Adrenal gland (tissue), 19 donors: ENCODE measurements at regions of chr18 and their contacts with region 1.

Region 1: DNA sequence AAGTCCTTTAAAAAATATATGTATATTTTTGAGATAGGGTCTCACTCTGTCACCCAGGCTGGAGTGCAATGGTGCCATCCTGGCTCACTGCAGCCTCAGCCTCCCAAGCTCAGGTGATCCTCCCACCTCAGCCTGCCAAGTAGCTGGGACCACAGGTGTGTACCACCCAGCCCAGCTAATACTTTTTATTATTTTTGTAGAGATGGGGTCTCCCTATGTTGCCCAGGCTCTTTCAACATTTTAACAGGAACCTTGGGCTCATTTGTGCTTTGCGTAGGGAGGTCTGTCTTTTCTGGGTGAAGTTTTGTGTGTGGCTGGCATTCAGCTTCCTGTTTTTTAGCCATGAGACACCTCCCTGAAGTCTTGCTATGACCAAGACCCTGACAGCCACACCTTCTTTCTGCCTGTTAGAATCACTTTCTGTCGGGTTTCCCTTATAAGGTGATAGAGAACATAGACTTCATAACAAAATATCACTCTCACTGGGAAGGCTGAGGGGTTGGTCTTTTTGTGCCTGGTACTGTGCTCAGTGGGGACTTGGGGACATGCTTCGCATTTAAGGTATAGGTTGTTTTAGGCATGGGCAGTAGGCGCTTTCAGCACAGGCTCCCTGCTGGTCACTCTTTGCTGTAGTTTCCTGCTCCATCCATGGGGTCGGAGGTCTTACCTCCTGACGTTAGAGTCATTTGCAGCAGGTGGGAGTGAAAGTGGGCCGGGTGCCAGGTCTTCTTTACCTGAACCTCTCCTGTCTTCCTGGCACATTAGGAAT is 3.4 kb downstream of the RAB31 start:
- DNase-seq: no peak
- H3K4me3 ChIP-seq: peak overlapping the region in 1 of 4 donors; percentile 94
- H3K27ac ChIP-seq: peak overlapping the region in 4 of 5 donors; percentile 39 to 98 (median 85)
- H3K4me1 ChIP-seq: peaks cover 30 to 62% of the 10 kb centered on the region in 2 donors
- H3K27me3 ChIP-seq: no peaks in the 10 kb centered on the region
- CTCF ChIP-seq: no peak
- POLR2A ChIP-seq: no peak

Region 2: GRCh38 chr18:9404565-9405060 is 306.9 kb before region 1 on chr18:
- intact Hi-C with region 1: no loop called
- DNase-seq: peak in 2 of 7 donors; percentile 10
- H3K4me3 ChIP-seq: no peak overlapping the region
- H3K27ac ChIP-seq: no peak overlapping the region
- H3K4me1 ChIP-seq: no peaks in the 10 kb centered on the region
- H3K27me3 ChIP-seq: no peaks in the 10 kb centered on the region
- CTCF ChIP-seq: no peak
- POLR2A ChIP-seq: no peak

Region 3: DNA sequence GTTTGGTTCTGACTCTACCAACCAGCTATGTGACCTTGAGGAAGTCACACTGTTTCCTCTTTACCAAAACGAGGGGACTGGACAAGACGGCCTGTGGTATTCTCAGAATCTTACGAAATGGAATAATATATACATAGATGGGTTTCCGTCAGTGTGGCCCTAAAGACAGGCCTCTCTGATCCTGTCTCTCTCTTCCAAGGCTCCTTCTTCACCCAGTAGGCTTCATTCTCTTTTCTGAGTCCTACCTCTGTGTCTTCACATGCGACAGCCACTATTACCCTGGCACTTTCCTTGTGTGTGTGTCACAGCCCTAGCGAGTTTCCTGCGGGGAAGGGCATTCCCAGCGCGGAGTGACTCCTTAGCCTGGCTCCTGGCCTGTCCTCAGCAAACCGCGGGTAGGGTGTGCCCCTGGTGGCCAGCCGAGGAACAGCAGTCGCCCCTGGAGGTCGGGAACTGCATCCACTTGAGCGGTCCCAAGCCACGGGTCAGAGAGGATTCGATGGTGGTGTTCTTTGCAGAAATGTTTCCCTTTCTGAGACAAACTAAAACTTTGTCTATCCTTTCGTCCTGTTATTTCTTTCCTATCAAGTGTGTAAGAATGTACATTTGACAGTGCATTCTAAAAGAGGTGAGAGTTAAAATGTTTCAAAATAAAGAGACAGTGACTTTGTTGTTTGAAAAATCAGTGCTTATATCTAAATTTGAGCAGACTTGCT is 59.9 kb after region 1 on chr18:
- intact Hi-C with region 1: loop called in 1 of 2 experiments (anchors 10 kb)
- DNase-seq: peak; percentile 88 to 95 (median 90)
- H3K4me3 ChIP-seq: no peak overlapping the region
- H3K27ac ChIP-seq: peak overlapping the region; percentile 62 to 85 (median 71)
- H3K4me1 ChIP-seq: peaks cover 54 to 66% of the 10 kb centered on the region in 2 donors
- H3K27me3 ChIP-seq: no peaks in the 10 kb centered on the region
- CTCF ChIP-seq: peak; percentile 97 to 99 (median 98)
- POLR2A ChIP-seq: peak in 1 of 2 donors; percentile 24

Region 4: DNA sequence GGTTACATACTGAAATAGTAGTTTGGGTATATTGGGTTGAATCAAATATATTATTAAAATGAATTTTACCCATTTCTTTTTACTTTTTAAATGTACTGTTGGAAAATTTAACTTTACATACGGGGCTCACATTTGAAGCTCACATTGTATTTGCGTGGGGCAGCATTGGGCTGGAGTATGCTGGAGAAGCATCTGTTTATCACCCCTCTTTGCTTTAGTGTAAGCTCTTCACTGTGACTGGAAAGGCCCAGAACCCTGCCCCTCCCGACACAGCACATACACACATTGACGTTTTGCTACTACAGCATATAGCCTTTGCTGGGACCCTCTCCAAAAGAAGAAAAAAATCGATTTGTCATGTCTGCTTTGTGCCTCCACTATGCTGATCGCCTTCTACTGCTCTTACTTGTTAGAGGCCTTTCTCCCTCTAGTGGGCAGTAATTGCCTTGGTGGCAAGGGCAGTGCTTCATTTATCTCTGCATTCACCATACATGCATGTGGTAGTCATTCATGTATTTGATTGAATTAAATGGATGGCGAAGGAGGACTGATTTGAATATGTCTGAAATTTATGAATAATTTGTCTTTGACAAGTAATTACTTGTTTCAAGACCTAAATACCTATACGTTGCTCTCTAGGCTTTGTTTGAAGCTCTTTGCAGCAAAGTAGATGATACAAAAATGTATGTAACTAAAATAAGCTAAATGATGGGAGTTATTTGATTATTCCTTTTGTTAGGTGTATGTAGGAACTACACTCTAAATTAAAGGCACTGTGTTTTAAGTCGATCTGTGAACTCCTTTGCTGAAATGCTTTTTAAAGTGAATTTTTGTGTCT is 239.7 kb after region 1 on chr18:
- intact Hi-C with region 1: no loop called
- DNase-seq: peak in 3 of 7 donors; percentile 24 to 67 (median 56)
- H3K4me3 ChIP-seq: no peak overlapping the region
- H3K27ac ChIP-seq: peak overlapping the region in 2 of 5 donors; percentile 2 to 50
- H3K4me1 ChIP-seq: peaks cover 6 to 31% of the 10 kb centered on the region in 2 donors
- H3K27me3 ChIP-seq: no peaks in the 10 kb centered on the region
- CTCF ChIP-seq: peak; percentile 44 to 65 (median 56)
- POLR2A ChIP-seq: no peak